Activated CD4-positive, alpha-beta T cell treated with anti-CD3 and anti-CD28 coated beads, Interleukin-2, amount 10 ng/mL, durations not matched to agents 24 days and 14 days (primary cell): ENCODE measurements at regions of chr9 and their contacts with region 1.

Region 1: DNA sequence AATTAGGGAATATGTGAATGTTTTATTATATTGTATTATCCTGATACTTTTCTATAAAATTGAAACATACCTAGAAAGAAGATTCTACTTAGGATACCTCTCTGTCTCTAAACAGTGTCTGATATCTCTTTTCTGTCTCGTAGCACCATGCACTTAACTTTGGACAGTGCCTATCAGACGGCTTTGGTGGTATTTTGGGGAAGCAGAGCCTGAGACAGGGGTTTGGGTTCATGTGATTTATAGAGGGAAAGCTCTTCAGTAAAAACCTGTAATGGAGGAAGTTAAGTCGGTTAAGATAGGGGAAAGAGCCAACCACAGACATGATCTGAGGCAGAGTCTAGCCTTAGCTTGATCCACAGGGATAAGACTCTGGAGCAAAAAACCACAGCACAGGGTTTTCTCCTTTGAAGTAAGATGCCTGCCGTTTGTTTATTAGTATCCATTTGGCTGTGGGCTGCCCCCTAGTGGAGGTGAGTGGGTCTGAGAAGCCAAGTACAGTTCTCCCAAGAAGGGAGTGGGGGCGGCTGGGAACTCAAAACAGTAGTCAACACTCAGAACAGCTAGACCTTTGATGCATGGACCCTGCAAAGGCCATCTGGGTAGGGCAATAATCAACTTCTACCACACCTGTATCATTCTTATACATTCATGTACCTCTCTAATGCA is 141.2 kb upstream of the ASTN2 start:
- DNase-seq: peak; percentile 72
- H3K4me3 Mint-ChIP-seq: no peak overlapping the region
- H3K27ac Mint-ChIP-seq: peak overlapping the region; percentile 40
- H3K4me1 Mint-ChIP-seq: no peaks in the 10 kb centered on the region
- H3K27me3 Mint-ChIP-seq: no peaks in the 10 kb centered on the region

Region 2: DNA sequence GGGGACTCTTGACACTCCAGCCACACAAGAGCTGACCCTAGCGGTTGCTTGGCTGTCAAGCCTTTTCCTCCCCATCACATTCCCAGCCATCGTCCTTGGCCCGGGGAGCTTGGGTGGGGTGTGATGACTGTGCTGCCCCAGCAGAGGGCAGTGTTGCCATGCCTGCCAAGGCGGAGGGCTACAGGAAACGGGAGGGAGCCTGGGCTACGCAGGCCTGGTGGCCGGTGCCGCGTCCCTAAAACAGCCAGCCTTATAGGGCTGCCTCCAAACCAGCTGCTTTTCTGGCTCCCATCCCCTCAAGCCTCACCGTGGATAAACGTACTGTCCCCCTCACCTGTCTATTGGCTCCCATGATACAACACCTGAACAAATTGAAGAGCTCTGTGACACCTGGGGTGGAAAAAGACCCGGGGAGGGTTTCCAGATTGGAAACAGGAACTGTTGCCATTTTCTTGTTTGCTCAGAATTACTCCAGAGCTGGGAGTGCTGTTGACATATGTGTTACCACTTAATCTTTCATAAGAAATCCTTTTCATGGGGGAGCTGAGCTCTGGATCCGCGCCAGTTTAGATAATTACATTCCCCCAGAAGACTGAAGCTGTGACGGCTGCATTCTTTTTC is 68.4 kb before region 1 on chr9:
- intact Hi-C with region 1: loop called (anchors 1 kb)
- DNase-seq: peak; percentile 84
- H3K4me3 Mint-ChIP-seq: no peak overlapping the region
- H3K27ac Mint-ChIP-seq: no peak overlapping the region
- H3K4me1 Mint-ChIP-seq: no peaks in the 10 kb centered on the region
- H3K27me3 Mint-ChIP-seq: no peaks in the 10 kb centered on the region

Region 3: GRCh38 chr9:117622347-117622746 is 66.2 kb after region 1 on chr9:
- intact Hi-C with region 1: no loop called
- DNase-seq: no peak
- H3K4me3 Mint-ChIP-seq: no peak overlapping the region
- H3K27ac Mint-ChIP-seq: no peak overlapping the region
- H3K4me1 Mint-ChIP-seq: no peaks in the 10 kb centered on the region
- H3K27me3 Mint-ChIP-seq: no peaks in the 10 kb centered on the region